ENCODE measurements at regions of chr1 and their contacts with region 1.

Region 1: GRCh38 chr1:67339623-67340343 is 32.1 kb downstream of the IL12RB2 start:
- DNase-seq: no peak
- H3K4me3 Mint-ChIP-seq: no peak overlapping the region
- H3K27ac Mint-ChIP-seq: peak overlapping the region; percentile 89
- H3K4me1 Mint-ChIP-seq: peaks cover 78% of the 10 kb centered on the region
- H3K27me3 Mint-ChIP-seq: no peaks in the 10 kb centered on the region

Region 2: GRCh38 chr1:66929999-66930822 is 409.6 kb before region 1 on chr1:
- intact Hi-C with region 1: loop called (anchors 5 kb)
- DNase-seq: peak; percentile 93
- H3K4me3 Mint-ChIP-seq: peak overlapping the region; percentile 90
- H3K27ac Mint-ChIP-seq: peak overlapping the region; percentile 91
- H3K4me1 Mint-ChIP-seq: peaks cover 55% of the 10 kb centered on the region
- H3K27me3 Mint-ChIP-seq: no peaks in the 10 kb centered on the region

Region 3: GRCh38 chr1:67053785-67054772 is 285.7 kb before region 1 on chr1 and contains the start of gene SLC35D1:
- intact Hi-C with region 1: loop called (anchors 10 kb)
- DNase-seq: peak; percentile 71
- H3K4me3 Mint-ChIP-seq: peak within 1 kb of the TSS; percentile 92
- H3K27ac Mint-ChIP-seq: peak within 1 kb of the TSS; percentile 93
- H3K4me1 Mint-ChIP-seq: peaks cover 25% of the 10 kb centered on the region
- H3K27me3 Mint-ChIP-seq: peaks cover 7% of the 10 kb centered on the region
- total RNA-seq, gene SLC35D1: 14.5 and 14.8 TPM in 2 replicates

Region 4: GRCh38 chr1:67110352-67110751 is 229.4 kb before region 1 on chr1:
- intact Hi-C with region 1: no loop called
- DNase-seq: no peak
- H3K4me3 Mint-ChIP-seq: no peak overlapping the region
- H3K27ac Mint-ChIP-seq: no peak overlapping the region
- H3K4me1 Mint-ChIP-seq: no peaks in the 10 kb centered on the region
- H3K27me3 Mint-ChIP-seq: peaks cover 11% of the 10 kb centered on the region

Region 5: GRCh38 chr1:67214420-67215174 is 125.2 kb before region 1 on chr1:
- intact Hi-C with region 1: loop called (anchors 5 kb)
- DNase-seq: no peak
- H3K4me3 Mint-ChIP-seq: no peak overlapping the region
- H3K27ac Mint-ChIP-seq: no peak overlapping the region
- H3K4me1 Mint-ChIP-seq: peaks cover 32% of the 10 kb centered on the region
- H3K27me3 Mint-ChIP-seq: no peaks in the 10 kb centered on the region

Region 6: DNA sequence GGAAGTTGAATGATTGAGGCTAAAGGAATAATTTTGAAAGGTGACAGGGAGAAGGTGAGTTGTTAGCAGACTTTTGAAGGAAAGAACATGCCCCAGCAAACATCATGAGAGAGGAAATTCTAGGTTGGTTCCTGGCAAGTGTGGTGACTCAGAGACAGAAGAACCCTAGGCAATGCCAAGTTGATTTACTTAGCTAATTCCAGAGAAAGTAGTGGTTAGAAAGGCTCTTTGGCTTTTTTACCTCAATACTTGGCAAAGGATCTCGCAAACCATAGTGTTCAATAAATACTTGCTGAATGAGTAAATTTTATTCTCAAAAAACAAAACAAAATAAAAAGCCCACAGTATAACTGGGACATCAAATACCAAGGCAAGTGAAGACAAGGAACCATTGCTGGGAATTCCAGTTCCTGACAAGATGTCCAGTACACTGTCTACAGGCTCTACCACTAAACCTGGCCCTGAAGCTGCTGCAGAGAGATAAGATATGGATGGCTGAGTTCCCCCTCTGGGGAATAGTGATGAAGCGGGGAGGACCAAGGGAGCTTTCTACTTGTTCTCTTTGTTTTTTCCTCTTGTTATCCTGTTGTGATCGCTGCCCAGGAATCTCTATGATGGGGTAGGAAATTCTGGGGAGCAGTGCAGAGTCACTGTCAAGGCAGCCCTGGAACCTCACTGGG is 16.1 kb after region 1 on chr1:
- intact Hi-C with region 1: loop called (anchors 2 kb)
- DNase-seq: no peak
- H3K4me3 Mint-ChIP-seq: no peak overlapping the region
- H3K27ac Mint-ChIP-seq: peak overlapping the region; percentile 51
- H3K4me1 Mint-ChIP-seq: peaks cover 24% of the 10 kb centered on the region
- H3K27me3 Mint-ChIP-seq: no peaks in the 10 kb centered on the region

Region 7: DNA sequence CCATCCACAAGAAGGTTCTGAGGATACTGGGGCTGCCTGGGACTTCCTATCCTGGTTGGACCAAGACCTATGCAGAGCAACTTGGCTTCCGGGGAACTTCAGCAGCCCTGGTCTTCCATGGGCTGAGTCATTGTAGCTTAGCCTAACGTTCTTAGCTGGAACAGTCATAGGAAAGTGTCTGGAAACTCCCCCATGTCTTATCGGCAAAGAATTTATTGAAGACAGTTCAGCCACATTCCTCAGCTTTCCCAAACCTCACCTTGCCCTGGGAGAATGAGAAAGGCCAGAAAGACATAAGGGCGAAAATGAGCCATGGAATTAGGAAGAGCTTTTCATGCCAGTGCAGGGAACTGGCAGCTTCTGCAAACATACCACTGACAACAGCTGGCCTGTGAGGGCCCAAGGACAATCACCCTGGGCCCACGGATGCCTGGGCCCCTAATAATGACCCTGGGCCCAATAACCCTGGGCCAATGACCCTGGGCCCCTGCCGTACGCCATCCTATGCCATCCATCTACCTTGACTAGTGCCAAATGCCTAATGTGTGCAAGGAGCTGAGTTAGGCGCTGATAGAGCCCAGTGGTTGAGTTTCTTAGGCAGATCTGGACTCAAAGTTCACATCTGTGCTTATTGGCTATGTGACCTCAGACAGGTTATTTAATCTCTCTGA is 230.8 kb after region 1 on chr1:
- intact Hi-C with region 1: no loop called
- DNase-seq: no peak
- H3K4me3 Mint-ChIP-seq: no peak overlapping the region
- H3K27ac Mint-ChIP-seq: no peak overlapping the region
- H3K4me1 Mint-ChIP-seq: no peaks in the 10 kb centered on the region
- H3K27me3 Mint-ChIP-seq: peaks cover 9% of the 10 kb centered on the region